Left cardiac atrium (tissue), 4 donors: ENCODE measurements at regions of chr4 and their contacts with region 1.

Region 1: GRCh38 chr4:168917138-168917779 is 92.8 kb downstream of the CBR4 start:
- DNase-seq: no peak
- ATAC-seq: no peak

Region 2: GRCh38 chr4:168514249-168514852 is 402.9 kb before region 1 on chr4:
- intact Hi-C with region 1: loop called (anchors 10 kb)
- DNase-seq: no peak
- ATAC-seq: no peak

Region 3: DNA sequence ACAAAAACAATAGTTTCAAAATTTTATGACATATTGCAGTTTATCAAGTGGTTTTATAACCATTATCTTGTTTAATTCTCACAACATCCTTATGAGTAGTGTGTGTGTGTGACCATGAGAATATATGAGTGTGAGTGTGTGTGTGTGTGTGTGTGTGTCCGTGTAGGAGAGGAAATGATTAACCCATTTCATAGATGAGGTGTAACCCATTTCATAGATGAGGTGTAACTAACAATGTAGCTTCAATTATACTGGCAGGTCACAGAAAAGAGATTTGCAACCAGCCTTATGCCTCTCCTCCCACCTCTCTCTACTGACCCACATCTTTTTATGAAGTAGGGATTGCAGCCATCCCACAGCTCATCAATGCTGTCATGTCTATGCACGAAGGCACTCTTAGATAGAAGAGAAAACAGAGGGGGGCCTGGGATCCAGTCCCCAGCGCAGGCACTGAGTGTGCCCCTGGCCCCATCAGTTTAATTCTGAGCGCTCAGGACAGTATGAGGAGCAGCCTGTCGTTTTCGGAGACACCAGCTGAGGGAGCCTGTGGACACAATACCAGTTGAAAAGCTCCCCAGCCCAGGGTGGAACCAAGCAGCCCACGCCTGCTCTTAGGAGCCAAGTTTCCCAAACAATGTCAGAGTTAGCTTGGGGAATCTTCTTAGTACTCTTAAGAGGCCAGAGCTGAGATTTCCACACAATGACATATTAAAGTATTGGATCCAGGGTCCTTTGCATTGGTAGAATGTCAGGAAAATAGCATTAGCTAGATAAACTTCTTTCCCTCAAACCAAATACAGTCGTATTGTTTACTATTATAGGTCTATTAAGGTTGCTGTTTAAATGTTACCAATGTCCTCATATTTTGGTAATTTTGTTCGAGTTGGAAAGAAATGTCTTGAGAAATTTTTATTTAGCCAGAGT is 331.8 kb before region 1 on chr4:
- intact Hi-C with region 1: loop called in 1 of 2 experiments (anchors 5 kb)
- DNase-seq: peak; percentile 87
- ATAC-seq: peak; percentile 79 to 91

Region 4: GRCh38 chr4:168710353-168710946 is 206.8 kb before region 1 on chr4:
- intact Hi-C with region 1: loop called (anchors 5 to 10 kb)
- DNase-seq: no peak
- ATAC-seq: peak in 1 of 2 donors; percentile 48

Region 5: DNA sequence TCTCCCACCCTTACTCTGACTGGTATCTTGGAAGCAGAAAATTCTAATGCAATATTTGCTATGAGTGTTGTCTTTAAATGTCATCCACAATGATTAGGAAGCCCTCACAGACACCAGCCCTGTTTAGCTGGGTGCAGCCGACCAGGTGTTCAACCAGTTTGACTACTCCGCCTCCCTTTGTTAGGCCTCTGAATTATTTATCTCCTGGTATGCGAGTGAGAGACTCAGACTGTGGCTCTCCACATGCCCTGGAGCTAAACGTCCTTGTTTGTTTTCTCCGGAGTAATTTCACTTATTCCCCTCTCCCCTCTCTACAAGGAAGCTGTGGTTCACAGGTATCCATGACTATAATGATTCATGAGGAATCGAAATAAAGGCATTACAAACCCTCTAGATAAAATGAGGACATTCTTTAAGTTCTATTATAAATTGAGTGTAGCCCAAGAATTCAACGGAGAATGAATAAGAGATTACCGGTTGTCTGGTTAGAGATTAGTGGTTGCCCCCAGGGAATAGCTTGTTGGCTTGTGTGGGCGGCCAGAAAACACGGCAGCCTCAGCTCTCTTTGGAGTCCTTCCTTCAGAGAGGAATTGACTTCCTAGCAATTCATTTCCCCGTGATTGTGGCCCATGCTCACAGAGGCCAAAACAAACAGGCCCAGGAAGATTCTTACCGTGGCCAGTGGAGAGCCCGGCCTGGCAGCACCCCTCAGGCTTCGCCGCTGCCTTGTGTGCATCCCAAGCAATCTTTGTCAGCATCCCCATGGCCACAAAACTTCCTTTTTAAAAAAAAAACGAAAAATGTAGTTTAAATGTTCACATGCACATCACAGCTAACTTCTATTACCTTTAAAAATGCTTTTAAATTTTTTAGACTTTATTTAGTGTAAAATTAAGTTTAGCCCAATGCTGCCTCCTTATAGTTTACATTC is 153.0 kb after region 1 on chr4:
- intact Hi-C with region 1: no loop called
- DNase-seq: peak; percentile 34
- ATAC-seq: peak; percentile 66 to 77

Region 6: DNA sequence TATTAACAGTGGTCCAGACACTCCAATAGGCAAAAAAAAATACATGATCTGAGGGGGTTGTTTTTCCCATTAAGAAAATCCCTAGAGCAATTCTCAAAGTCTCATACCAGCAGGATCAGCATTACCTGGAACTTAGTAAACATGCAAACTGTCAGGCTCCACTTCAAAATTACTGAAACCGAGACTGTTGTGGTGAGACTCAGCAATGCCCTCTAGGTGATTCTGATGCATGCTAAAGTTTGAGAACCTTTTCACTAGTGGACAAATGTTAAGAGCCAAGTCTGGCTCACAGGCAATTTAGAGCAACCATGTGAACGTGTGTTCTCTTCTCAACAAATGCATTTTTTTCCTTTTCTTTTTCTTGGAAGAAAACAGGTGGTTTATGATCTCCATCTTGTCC is 664.9 kb after region 1 on chr4:
- intact Hi-C with region 1: no loop called
- DNase-seq: no peak
- ATAC-seq: no peak